ENCODE measurements at regions of chr2 and their contacts with region 1.

Region 1: DNA sequence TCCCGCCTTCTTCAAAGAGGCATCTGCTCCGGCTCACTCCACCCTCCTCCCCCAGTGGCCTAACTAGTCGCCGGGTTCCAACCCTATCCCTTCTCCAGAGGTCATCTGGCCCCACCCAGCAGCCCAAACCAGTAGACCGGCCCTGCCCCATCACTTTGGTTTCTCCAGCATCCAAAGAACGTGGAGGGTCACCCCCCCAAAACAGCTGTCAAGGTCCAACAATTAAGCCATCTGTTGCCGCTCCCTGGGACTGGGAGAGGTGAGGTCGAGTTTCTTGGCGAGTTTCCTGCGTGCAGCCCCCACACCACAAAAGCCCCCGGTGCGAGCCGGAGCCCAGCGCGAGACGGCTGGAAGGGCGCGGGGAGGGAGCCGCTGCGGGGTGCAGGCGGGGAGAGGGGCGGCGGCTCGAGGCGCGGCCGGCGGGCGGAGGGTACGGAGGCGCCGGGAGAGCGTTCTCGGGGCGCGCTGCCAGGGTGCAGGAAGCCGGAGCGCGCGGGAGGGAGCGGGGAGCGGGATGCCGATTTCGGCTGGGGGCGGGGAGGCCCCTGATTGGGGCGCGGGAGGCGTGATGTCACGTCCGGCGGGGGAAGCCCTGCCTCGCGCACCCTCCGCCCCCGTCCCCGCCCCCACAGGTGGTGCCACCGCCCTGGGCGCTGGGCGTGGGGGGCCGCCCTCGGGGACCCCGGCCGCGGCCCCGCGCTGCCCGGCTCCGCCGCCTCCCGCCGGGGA is 571 bp upstream of the GPC1 start:
- DNase-seq: peak; percentile 93 to 97
- H3K4me3 ChIP-seq: peak overlapping the region; percentile 68 to 83 (median 72)
- H3K27ac ChIP-seq: peak overlapping the region; percentile 83 to 97 (median 89)
- H3K4me1 ChIP-seq: peaks cover 35 to 43% (median 38%) of the 10 kb centered on the region in 4 donors
- H3K27me3 ChIP-seq: peaks cover 0 to 57% (median 19%) of the 10 kb centered on the region in 3 donors
- CTCF ChIP-seq: no peak
- EP300 ChIP-seq: no peak
- POLR2A ChIP-seq: no peak

Region 2: DNA sequence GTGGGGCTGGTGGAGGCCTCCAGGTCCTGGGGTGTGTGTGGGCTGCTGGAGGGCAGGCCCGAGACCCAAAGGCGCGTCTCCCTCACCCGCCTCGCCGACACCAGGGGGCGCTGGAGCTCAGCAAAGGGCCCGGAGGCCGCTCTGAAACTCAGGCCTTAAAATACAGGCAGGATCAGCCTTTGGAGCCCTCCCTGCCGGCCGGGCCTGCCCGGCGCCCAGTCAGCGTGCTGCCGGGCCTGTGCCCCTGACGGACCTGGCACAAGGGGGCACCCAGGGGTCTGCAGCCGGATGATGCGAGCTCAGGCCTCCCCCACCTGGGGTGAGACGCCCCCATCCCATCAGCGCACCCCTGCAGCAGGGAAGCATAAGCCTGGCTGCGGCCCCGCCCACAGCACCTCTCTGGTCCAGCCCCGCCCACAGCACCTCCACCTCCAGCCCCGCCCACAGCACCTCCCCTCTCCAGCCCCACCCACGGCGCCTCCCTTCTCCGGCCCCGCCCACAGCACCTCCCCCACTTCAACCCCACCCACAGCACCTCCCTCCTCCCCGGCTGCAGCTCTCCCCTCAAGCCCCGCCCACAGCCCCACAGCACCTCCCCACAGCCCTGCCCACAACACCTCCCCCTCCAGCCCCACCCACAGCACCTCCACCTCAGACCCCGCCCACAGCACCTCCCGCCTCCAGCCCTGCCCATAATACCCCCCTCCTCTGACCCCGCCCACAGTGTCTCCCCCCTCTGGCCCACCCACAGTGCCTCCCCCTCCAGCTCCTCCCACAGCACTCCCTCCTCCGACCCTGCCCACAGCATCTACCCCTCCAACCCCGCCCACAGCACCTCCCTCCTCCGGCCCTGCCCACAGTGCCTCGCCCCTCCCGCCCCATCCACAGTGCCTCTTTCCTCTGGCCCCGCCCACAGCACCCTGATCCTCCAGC is 201.7 kb before region 1 on chr2:
- intact Hi-C with region 1: loop called (anchors 5 kb)
- DNase-seq: peak; percentile 91 to 92
- H3K4me3 ChIP-seq: peak overlapping the region; percentile 35 to 47 (median 40)
- H3K27ac ChIP-seq: peak overlapping the region; percentile 24 to 69 (median 59)
- H3K4me1 ChIP-seq: peaks cover 27 to 40% (median 38%) of the 10 kb centered on the region in 4 donors
- H3K27me3 ChIP-seq: peaks cover 0 to 10% (median 0%) of the 10 kb centered on the region in 3 donors
- CTCF ChIP-seq: peak in 5 of 7 experiments; percentile 65 to 88 (median 82)
- EP300 ChIP-seq: no peak
- POLR2A ChIP-seq: no peak